ENCODE measurements at regions of chr20 and their contacts with region 1.

Region 1: DNA sequence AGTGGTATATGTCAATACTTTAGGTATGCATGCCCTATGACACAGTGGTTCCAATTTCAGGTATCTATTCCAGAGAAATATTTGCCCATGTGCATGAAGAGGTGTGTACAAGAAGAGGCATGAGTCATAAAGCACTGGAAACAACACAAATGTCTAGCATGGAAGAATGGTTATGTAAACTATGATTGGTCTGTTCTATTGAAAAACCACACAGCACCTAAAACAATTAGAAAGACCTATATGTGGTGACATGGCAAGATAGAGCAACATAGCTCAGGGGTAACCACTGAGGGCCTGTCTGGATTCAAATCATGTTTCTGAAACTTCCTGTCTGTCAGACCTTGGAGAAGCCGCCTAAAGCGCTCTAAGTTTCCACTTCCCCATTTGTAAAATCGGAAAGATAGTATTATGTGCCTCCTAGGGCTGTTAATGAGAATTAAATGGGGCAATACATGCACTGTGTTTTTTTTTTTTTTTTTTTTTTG is 76.0 kb upstream of the SHLD1 start:
- DNase-seq: peak; percentile 49
- H3K4me3 Mint-ChIP-seq: no peak overlapping the region
- H3K27ac Mint-ChIP-seq: peak overlapping the region; percentile 80
- H3K4me1 Mint-ChIP-seq: peaks cover 13% of the 10 kb centered on the region
- H3K27me3 Mint-ChIP-seq: no peaks in the 10 kb centered on the region

Region 2: GRCh38 chr20:5550733-5551529 is 123.3 kb before region 1 on chr20:
- CTCF ChIA-PET with region 1: no interaction called
- POLR2A ChIA-PET with region 1: no interaction called
- intact Hi-C with region 1: loop called (anchors 1 kb)
- DNase-seq: no peak
- H3K4me3 Mint-ChIP-seq: no peak overlapping the region
- H3K27ac Mint-ChIP-seq: no peak overlapping the region
- H3K4me1 Mint-ChIP-seq: peaks cover 23% of the 10 kb centered on the region
- H3K27me3 Mint-ChIP-seq: no peaks in the 10 kb centered on the region

Region 3: GRCh38 chr20:5596401-5597193 is 77.6 kb before region 1 on chr20:
- CTCF ChIA-PET with region 1: no interaction called
- POLR2A ChIA-PET with region 1: no interaction called
- intact Hi-C with region 1: no loop called
- DNase-seq: no peak
- H3K4me3 Mint-ChIP-seq: no peak overlapping the region
- H3K27ac Mint-ChIP-seq: peak overlapping the region; percentile 66
- H3K4me1 Mint-ChIP-seq: peaks cover 66% of the 10 kb centered on the region
- H3K27me3 Mint-ChIP-seq: no peaks in the 10 kb centered on the region

Region 4: GRCh38 chr20:5658912-5659345 is 15.3 kb before region 1 on chr20:
- CTCF ChIA-PET with region 1: no interaction called
- POLR2A ChIA-PET with region 1: no interaction called
- intact Hi-C with region 1: loop called (anchors 1 kb)
- DNase-seq: peak; percentile 71
- H3K4me3 Mint-ChIP-seq: no peak overlapping the region
- H3K27ac Mint-ChIP-seq: peak overlapping the region; percentile 66
- H3K4me1 Mint-ChIP-seq: peaks cover 26% of the 10 kb centered on the region
- H3K27me3 Mint-ChIP-seq: no peaks in the 10 kb centered on the region

Region 5: DNA sequence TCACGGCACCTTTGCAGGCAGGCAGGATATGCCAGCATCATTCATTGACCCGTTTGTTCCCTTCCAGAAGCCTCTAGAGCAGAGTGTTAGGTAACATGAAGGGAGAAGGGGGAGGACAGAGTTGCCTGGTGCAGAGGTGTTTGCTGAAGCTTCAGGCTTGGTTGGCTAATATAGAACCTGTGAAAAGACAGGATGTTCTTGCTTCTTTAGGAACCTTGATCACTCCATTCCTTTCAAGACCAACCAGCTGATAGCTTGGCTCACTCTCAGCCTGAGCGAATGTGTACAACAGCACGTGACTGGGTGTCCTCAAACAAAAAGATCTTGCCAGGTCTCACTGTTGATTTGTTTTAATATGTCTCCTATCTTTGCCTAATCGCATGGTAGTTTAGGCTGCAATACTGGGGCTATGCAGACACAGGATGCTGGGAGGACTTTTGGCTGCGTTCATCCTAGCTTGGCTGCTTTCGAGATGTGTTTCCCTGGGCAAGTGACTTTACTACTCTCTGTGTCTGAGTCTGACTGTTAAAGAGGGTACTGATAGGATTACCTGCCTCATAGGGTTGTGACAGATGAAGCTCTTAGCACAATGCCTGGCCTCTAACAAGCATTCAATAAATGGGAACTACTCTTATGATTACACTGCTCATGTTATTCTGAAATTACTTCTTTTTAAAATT is 92.0 kb after region 1 on chr20:
- CTCF ChIA-PET with region 1: no interaction called
- POLR2A ChIA-PET with region 1: no interaction called
- intact Hi-C with region 1: loop called (anchors 2 kb)
- DNase-seq: no peak
- H3K4me3 Mint-ChIP-seq: no peak overlapping the region
- H3K27ac Mint-ChIP-seq: no peak overlapping the region
- H3K4me1 Mint-ChIP-seq: peaks cover 23% of the 10 kb centered on the region
- H3K27me3 Mint-ChIP-seq: no peaks in the 10 kb centered on the region

Region 6: GRCh38 chr20:5835321-5835821 is 161.2 kb after region 1 on chr20:
- CTCF ChIA-PET with region 1: no interaction called
- POLR2A ChIA-PET with region 1: no interaction called
- intact Hi-C with region 1: no loop called
- DNase-seq: peak; percentile 30
- H3K4me3 Mint-ChIP-seq: peak overlapping the region; percentile 10
- H3K27ac Mint-ChIP-seq: peak overlapping the region; percentile 56
- H3K4me1 Mint-ChIP-seq: peaks cover 31% of the 10 kb centered on the region
- H3K27me3 Mint-ChIP-seq: no peaks in the 10 kb centered on the region

Region 7: GRCh38 chr20:5859608-5860007 is 185.4 kb after region 1 on chr20:
- CTCF ChIA-PET with region 1: no interaction called
- POLR2A ChIA-PET with region 1: no interaction called
- intact Hi-C with region 1: no loop called
- DNase-seq: no peak
- H3K4me3 Mint-ChIP-seq: no peak overlapping the region
- H3K27ac Mint-ChIP-seq: no peak overlapping the region
- H3K4me1 Mint-ChIP-seq: peaks cover 20% of the 10 kb centered on the region
- H3K27me3 Mint-ChIP-seq: no peaks in the 10 kb centered on the region

Measured in activated CD4-positive, alpha-beta memory T cell treated with anti-CD3 and anti-CD28 coated beads for 36 hours (primary cell).